CD8-positive, alpha-beta T cell (primary cell): ENCODE measurements at regions of chr4 and their contacts with region 1.

Region 1: GRCh38 chr4:39908284-39908683 is 69.4 kb downstream of the PDS5A start:
- DNase-seq: no peak
- ATAC-seq: no peak
- H3K4me3 ChIP-seq: no peak overlapping the region
- H3K4me3 Mint-ChIP-seq: no peak overlapping the region
- H3K27ac ChIP-seq: no peak overlapping the region
- H3K27ac Mint-ChIP-seq: no peak overlapping the region
- H3K4me1 ChIP-seq: no peaks in the 10 kb centered on the region
- H3K4me1 Mint-ChIP-seq: no peaks in the 10 kb centered on the region
- H3K27me3 ChIP-seq: no peaks in the 10 kb centered on the region
- H3K27me3 Mint-ChIP-seq: no peaks in the 10 kb centered on the region
- CTCF ChIP-seq: no peak

Region 2: DNA sequence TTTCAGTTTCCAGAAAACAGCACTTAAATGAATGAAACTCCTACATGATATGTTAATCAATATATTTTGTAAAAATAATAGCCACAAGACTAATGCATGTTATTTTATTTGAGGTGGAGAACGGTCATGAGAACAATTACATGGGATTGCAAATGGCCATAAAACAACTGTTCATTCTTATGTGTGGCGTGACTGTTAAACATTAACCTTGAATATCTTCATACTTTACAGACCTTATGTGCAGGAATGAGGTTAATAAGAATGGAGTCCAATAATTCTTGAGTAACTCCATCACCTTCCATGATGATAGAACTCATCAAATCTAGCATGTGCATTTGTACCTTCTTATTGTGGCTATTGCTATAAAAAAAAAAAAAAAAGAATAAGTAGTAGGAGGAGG is 14.1 kb after region 1 on chr4:
- CTCF ChIA-PET with region 1: no interaction called
- POLR2A ChIA-PET with region 1: no interaction called
- intact Hi-C with region 1: loop called in 1 of 2 experiments (anchors 1 kb)
- DNase-seq: no peak
- ATAC-seq: no peak
- H3K4me3 ChIP-seq: no peak overlapping the region
- H3K4me3 Mint-ChIP-seq: no peak overlapping the region
- H3K27ac ChIP-seq: no peak overlapping the region
- H3K27ac Mint-ChIP-seq: no peak overlapping the region
- H3K4me1 ChIP-seq: no peaks in the 10 kb centered on the region
- H3K4me1 Mint-ChIP-seq: peaks cover 14% of the 10 kb centered on the region
- H3K27me3 ChIP-seq: no peaks in the 10 kb centered on the region
- H3K27me3 Mint-ChIP-seq: no peaks in the 10 kb centered on the region
- CTCF ChIP-seq: no peak

Region 3: DNA sequence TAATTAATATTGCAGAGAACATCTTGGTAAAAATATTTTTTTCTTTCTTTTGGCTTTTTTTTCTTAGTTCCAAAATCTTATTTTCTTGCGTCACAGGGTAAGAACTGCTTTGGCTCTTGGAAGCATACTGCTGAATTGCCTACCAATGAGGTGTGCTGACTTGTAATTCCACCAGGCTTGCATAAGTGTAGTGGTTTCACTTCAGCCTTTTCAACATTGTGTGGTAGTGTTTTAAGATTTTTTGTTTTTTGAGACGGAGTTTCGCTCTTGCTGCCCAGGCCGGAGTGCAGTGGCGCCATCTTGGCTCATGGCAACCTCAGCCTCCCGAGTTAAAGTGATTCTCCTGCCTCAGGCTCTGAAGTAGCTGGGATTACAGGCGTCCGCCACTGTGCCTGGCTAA is 190.7 kb after region 1 on chr4:
- CTCF ChIA-PET with region 1: no interaction called
- POLR2A ChIA-PET with region 1: no interaction called
- intact Hi-C with region 1: loop called in 1 of 2 experiments (anchors 10 kb)
- DNase-seq: no peak
- ATAC-seq: no peak
- H3K4me3 ChIP-seq: no peak overlapping the region
- H3K4me3 Mint-ChIP-seq: no peak overlapping the region
- H3K27ac ChIP-seq: no peak overlapping the region
- H3K27ac Mint-ChIP-seq: no peak overlapping the region
- H3K4me1 ChIP-seq: no peaks in the 10 kb centered on the region
- H3K4me1 Mint-ChIP-seq: peaks cover 9% of the 10 kb centered on the region
- H3K27me3 ChIP-seq: no peaks in the 10 kb centered on the region
- H3K27me3 Mint-ChIP-seq: no peaks in the 10 kb centered on the region
- CTCF ChIP-seq: no peak

Region 4: DNA sequence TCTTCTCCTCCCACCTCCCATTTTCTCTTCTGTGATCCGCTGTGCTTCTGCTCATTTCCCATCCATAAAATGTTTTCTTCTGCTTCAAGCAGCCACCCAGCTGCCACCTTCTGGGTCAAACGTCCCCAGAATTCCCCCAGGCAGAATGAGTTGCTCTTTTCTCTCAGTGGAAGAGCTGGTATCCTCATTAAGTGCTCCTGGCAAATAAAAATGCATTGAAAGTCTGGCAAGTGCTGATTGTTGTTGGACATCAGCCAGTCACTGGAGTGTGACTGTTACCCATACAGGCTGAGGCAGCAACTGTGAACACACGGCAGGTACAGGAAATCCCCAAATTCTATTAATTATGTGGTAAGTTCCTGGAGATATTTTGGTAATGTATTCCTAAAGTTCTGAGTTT is 1682.3 kb after region 1 on chr4:
- CTCF ChIA-PET with region 1: no interaction called
- POLR2A ChIA-PET with region 1: no interaction called
- intact Hi-C with region 1: no loop called
- DNase-seq: no peak
- ATAC-seq: no peak
- H3K4me3 ChIP-seq: no peak overlapping the region
- H3K4me3 Mint-ChIP-seq: no peak overlapping the region
- H3K27ac ChIP-seq: no peak overlapping the region
- H3K27ac Mint-ChIP-seq: no peak overlapping the region
- H3K4me1 ChIP-seq: no peaks in the 10 kb centered on the region
- H3K4me1 Mint-ChIP-seq: no peaks in the 10 kb centered on the region
- H3K27me3 ChIP-seq: no peaks in the 10 kb centered on the region
- H3K27me3 Mint-ChIP-seq: peaks cover 5% of the 10 kb centered on the region
- CTCF ChIP-seq: no peak